ENCODE measurements at regions of chr7 and their contacts with region 1.

Region 1: GRCh38 chr7:107150375-107151073 is 18.3 kb upstream of the HBP1 start:
- DNase-seq: peak in 1 of 2 experiments; percentile 71
- H3K4me3 ChIP-seq: no peak overlapping the region
- H3K27ac ChIP-seq: no peak overlapping the region
- H3K4me1 ChIP-seq: peaks cover 0 to 3% (median under 1%) of the 10 kb centered on the region in 4 experiments; a peak in 2 of 7 replicates
- H3K27me3 ChIP-seq: no peaks in the 10 kb centered on the region
- CTCF ChIP-seq: peak in 2 of 3 experiments; percentile 36 to 51; a peak in 2 of 4 replicates
- EP300 ChIP-seq: no peak
- POLR2A ChIP-seq: no peak
- RAD21 ChIP-seq: peak; percentile 62 to 68

Region 2: DNA sequence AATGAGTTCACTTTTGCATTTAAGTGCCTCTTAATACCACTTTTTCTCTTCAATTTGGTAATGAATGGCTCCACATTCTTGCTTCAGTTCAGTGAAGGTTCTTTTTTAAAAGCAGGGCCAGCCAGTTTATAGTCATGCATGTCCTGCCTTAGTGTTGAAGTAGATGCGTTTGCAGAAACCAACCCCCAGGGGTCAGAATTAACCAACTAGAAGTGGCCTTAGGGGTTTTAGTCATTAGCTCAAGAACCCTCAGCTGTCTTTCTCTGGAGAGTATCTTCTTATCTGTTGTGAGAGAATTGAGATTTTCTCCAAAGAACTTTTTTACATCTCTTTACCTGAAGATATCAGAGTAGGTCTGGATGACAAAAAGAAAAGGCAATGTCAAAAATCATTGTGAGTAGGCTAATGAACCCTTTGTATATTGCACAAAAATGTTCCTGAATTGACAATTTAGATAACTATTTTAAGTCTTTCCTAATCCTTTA is 203.2 kb before region 1 on chr7:
- CTCF ChIA-PET with region 1: interaction called, 162 read pairs
- POLR2A ChIA-PET with region 1: interaction called, 3 read pairs
- DNase-seq: peak in 1 of 2 experiments; percentile 83
- H3K4me3 ChIP-seq: no peak overlapping the region; a peak in 1 of 8 replicates
- H3K27ac ChIP-seq: no peak overlapping the region
- H3K4me1 ChIP-seq: peaks cover 0 to 14% (median 3%) of the 10 kb centered on the region in 4 experiments; a peak in 3 of 7 replicates
- H3K27me3 ChIP-seq: no peaks in the 10 kb centered on the region
- CTCF ChIP-seq: peak in 2 of 3 experiments; percentile 81 to 84; a peak in 3 of 4 replicates
- EP300 ChIP-seq: no peak
- POLR2A ChIP-seq: no peak
- RAD21 ChIP-seq: peak; percentile 90 to 96

Region 3: GRCh38 chr7:107047902-107048782 is 102.4 kb before region 1 on chr7:
- CTCF ChIA-PET with region 1: interaction called, 40 read pairs
- POLR2A ChIA-PET with region 1: no interaction called
- DNase-seq: peak in 1 of 2 experiments; percentile 69
- H3K4me3 ChIP-seq: no peak overlapping the region
- H3K27ac ChIP-seq: no peak overlapping the region
- H3K4me1 ChIP-seq: peaks cover 2 to 6% (median 5%) of the 10 kb centered on the region in 4 experiments; a peak in 4 of 7 replicates
- H3K27me3 ChIP-seq: no peaks in the 10 kb centered on the region
- CTCF ChIP-seq: peak; percentile 60 to 80 (median 77)
- EP300 ChIP-seq: no peak
- POLR2A ChIP-seq: no peak
- RAD21 ChIP-seq: peak; percentile 50 to 59

Region 4: DNA sequence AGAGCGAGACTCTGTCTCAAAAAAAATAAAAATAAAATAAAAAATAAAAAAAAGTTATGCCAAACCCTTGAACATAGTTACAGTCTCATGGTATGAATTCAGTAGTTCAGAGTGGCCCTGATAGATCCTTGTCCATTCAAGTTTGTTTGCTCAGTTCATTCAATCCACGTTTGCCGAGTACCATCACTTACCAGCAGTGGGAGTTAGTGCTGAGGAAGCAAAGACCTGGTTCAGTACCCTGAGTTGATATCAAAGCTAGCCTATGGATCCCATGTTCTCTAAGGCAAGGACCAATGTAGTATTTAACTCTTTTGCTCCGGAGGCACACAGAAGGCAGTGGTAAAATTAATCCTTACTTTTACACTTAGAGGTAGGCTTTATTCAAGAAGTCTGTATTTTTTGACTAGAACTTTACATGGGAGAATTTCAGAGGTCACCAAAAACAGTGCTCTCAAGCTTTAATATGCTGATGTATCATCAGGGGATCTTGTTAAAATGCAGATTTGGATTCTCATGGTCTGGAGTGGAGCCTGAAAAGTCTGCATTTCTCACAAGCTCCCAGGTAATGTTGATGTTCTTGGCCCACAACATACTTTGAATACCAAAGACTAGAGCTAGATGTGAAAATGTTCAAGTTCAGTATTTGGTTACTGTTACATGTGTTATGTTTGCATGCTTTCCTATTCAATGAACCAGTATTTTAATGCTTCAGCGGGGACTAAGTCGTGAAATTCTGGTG is 19.9 kb before region 1 on chr7:
- CTCF ChIA-PET with region 1: interaction called, 67 read pairs
- POLR2A ChIA-PET with region 1: no interaction called
- DNase-seq: no peak
- H3K4me3 ChIP-seq: 0 out of 8 replicates have a peak overlapping the region, but pooled peaks of 1 of the 4 experiments have one; percentile 39
- H3K27ac ChIP-seq: no peak overlapping the region
- H3K4me1 ChIP-seq: peaks cover 0 to 9% (median 4%) of the 10 kb centered on the region in 4 experiments; a peak in 4 of 7 replicates
- H3K27me3 ChIP-seq: no peaks in the 10 kb centered on the region
- CTCF ChIP-seq: peak in 2 of 3 experiments; percentile 31 to 50; a peak in 3 of 4 replicates
- EP300 ChIP-seq: no peak
- POLR2A ChIP-seq: no peak
- RAD21 ChIP-seq: peak; percentile 19 to 50; a peak in 3 of 4 replicates

Region 5: DNA sequence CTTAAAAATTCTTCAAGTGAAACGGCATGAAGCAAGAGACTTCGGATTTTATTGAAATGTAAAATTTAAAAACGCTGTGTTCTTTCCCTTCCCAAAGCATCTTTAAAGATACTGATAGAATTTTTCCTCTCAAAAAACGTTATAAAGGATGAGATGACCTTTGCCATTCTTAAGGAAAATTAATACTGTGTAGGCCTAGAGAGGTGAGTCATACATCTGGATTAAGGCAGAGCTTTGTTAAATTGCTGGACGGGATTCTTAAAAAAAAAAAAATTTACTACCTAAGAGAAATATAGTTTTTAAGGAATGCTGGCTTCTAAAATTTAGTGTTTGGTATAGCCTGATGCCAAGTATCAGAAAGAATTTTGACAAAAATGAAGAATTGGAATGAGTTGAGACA is 11.9 kb after region 1 on chr7:
- CTCF ChIA-PET with region 1: interaction called, 68 read pairs
- POLR2A ChIA-PET with region 1: interaction called, 9 read pairs
- DNase-seq: no peak
- H3K4me3 ChIP-seq: no peak overlapping the region
- H3K27ac ChIP-seq: no peak overlapping the region
- H3K4me1 ChIP-seq: no peaks in the 10 kb centered on the region
- H3K27me3 ChIP-seq: no peaks in the 10 kb centered on the region
- CTCF ChIP-seq: no peak
- EP300 ChIP-seq: no peak
- POLR2A ChIP-seq: no peak
- RAD21 ChIP-seq: no peak

Measured in H1 (cell line).